Activated CD8-positive, alpha-beta T cell treated with anti-CD3 and anti-CD28 coated beads, Interleukin-2, amount 10 ng/mL, durations not matched to agents 7 days and 5 days (primary cell): ENCODE measurements at regions of chr1 and their contacts with region 1.

Region 1: GRCh38 chr1:110829955-110830553 is 42.9 kb upstream of the CD53 start:
- DNase-seq: peak; percentile 59
- ATAC-seq: peak; percentile 88
- H3K4me3 Mint-ChIP-seq: no peak overlapping the region
- H3K27ac Mint-ChIP-seq: no peak overlapping the region
- H3K4me1 Mint-ChIP-seq: peaks cover 8% of the 10 kb centered on the region
- H3K27me3 Mint-ChIP-seq: peaks cover 6% of the 10 kb centered on the region

Region 2: GRCh38 chr1:110846861-110847260 is 16.8 kb after region 1 on chr1:
- CTCF ChIA-PET with region 1: interaction called, 13 read pairs
- POLR2A ChIA-PET with region 1: no interaction called
- DNase-seq: no peak
- ATAC-seq: no peak
- H3K4me3 Mint-ChIP-seq: no peak overlapping the region
- H3K27ac Mint-ChIP-seq: no peak overlapping the region
- H3K4me1 Mint-ChIP-seq: no peaks in the 10 kb centered on the region
- H3K27me3 Mint-ChIP-seq: no peaks in the 10 kb centered on the region

Region 3: DNA sequence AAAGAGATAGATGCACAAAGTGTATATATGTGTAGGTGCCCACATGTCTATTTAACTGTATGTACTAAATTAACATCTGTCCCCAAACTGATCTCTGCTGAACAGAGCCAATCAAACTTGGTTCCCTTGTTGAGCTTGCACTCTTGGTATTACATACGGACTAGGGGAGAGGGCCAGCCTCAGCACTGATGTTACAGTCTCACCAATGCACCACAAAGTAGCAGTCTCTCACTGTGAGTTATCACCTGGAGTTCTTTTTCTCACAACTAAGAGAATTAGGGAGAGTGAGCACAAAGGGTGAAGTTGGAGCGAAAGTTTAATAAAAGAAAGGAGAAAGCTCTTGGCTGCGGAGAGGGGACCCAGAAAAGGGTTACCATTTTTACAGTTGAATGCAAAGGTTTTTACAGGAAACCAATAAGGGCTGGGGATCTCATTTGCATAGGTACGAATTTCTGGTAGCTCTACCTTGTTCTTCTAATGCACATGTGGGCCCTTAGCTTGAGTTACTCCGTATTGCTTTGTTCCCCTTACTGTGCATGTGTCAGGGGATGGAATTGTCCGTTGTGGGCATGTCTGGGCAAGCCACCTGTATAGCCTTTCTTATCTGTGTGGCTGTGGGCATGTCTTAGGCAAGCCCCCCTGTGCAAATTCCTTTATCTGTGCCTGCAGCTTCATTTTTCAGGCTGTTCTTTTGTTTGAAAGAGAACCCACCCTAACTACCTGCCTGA is 384.2 kb after region 1 on chr1:
- CTCF ChIA-PET with region 1: no interaction called
- POLR2A ChIA-PET with region 1: no interaction called
- DNase-seq: no peak
- ATAC-seq: no peak
- H3K4me3 Mint-ChIP-seq: peak overlapping the region; percentile 76
- H3K27ac Mint-ChIP-seq: peak overlapping the region; percentile 91
- H3K4me1 Mint-ChIP-seq: peaks cover 83% of the 10 kb centered on the region
- H3K27me3 Mint-ChIP-seq: no peaks in the 10 kb centered on the region